Adrenal gland (tissue), 19 donors: ENCODE measurements at regions of chr2 and their contacts with region 1.

Region 1: GRCh38 chr2:192162392-192163042 is 32.2 kb downstream of the TMEFF2 start:
- DNase-seq: peak; percentile 48 to 88 (median 72)
- H3K4me3 ChIP-seq: no peak overlapping the region
- H3K27ac ChIP-seq: no peak overlapping the region
- H3K4me1 ChIP-seq: peaks cover 0 to 6% of the 10 kb centered on the region in 2 donors
- H3K27me3 ChIP-seq: no peaks in the 10 kb centered on the region
- CTCF ChIP-seq: peak; percentile 90 to 96 (median 94)
- POLR2A ChIP-seq: no peak

Region 2: GRCh38 chr2:191555092-191555742 is 607.3 kb before region 1 on chr2:
- intact Hi-C with region 1: loop called (anchors 5 to 10 kb)
- DNase-seq: peak; percentile 78 to 94 (median 86)
- H3K4me3 ChIP-seq: no peak overlapping the region
- H3K27ac ChIP-seq: no peak overlapping the region
- H3K4me1 ChIP-seq: no peaks in the 10 kb centered on the region
- H3K27me3 ChIP-seq: no peaks in the 10 kb centered on the region
- CTCF ChIP-seq: peak; percentile 60 to 79 (median 73)
- POLR2A ChIP-seq: no peak

Region 3: GRCh38 chr2:191811807-191812602 is 350.5 kb before region 1 on chr2:
- intact Hi-C with region 1: loop called (anchors 5 kb)
- DNase-seq: peak; percentile 35 to 88 (median 61)
- H3K4me3 ChIP-seq: no peak overlapping the region
- H3K27ac ChIP-seq: no peak overlapping the region
- H3K4me1 ChIP-seq: no peaks in the 10 kb centered on the region
- H3K27me3 ChIP-seq: no peaks in the 10 kb centered on the region
- CTCF ChIP-seq: peak; percentile 63 to 85 (median 82)
- POLR2A ChIP-seq: no peak